G401 (cell line): ENCODE measurements at regions of chr3 and their contacts with region 1.

Region 1: DNA sequence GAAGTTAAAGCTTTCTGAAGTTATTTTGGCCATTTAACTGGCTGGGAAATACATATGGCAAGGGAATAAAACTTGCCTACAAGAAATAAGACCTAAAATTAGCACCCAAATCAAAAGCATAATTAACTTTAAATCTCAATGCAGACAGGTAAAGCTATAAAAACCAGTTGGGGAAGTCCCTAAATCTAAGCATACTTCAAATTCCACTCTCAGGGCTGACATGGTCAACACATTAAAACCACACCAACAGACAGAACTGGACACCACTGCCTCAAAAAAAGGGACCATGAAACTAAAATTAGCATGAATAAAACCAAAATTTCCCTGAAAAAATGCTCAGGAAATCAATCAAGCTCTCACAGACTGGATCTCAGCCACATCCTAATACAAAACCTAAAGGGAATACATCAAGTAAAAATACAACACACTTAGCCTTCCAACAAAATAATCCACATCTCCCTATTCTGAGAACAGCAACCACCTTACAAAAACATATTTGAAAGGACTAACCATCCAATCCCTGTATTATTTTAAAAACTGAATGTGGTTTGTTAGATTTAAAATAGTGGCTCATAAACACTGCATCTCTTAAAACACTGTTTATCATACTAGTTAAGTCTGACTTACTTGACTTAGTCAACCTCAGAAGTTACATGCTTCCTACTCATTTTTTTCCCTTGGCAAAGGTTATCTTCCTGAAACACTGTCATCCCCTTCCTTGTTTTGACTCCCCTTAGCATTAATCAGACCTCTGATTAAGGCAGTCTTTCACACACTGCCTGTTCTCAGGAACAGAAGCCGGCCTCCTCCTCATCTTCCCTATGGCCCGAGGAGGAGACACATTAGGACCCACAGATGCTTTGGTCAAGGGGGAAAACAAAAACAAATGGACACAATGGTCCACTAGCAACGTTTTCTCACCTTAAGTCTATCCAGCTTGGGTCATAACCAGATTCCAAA is 8.3 kb downstream of the TRA2B start:
- DNase-seq: peak; percentile 10

Region 2: GRCh38 chr3:185824476-185825378 is 104.7 kb before region 1 on chr3 and contains the start of gene IGF2BP2:
- in situ Hi-C with region 1: loop called (anchors 10 kb)
- DNase-seq: peak; percentile 55
- total RNA-seq, gene IGF2BP2: 40.1 and 42.2 TPM in 2 replicates